ENCODE measurements at regions of chr10 and their contacts with region 1.

Region 1: DNA sequence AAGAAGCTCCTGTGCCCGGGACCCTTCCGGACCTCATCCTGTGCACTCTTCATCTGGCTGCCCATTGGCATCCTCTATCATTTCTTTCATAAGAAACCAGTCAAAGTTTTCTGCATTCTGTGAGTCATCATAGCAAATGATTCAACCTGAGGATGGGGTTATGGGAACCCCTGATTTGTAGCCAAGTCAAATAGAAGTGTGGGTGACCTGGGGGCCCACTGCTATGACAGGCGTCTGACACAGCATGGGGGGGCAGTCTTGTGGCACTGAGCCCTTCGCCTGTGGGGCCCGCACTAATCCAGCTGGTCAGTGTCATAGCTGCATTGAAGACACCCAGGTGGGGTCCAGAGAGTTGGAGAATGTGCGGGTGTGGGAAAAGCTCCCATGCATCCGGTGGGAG is 230.4 kb downstream of the USP6NL start:
- DNase-seq: no peak
- H3K4me3 ChIP-seq: no peak overlapping the region
- H3K27ac ChIP-seq: no peak overlapping the region
- H3K4me1 ChIP-seq: no peaks in the 10 kb centered on the region
- H3K27me3 ChIP-seq: no peaks in the 10 kb centered on the region
- CTCF ChIP-seq: no peak

Region 2: DNA sequence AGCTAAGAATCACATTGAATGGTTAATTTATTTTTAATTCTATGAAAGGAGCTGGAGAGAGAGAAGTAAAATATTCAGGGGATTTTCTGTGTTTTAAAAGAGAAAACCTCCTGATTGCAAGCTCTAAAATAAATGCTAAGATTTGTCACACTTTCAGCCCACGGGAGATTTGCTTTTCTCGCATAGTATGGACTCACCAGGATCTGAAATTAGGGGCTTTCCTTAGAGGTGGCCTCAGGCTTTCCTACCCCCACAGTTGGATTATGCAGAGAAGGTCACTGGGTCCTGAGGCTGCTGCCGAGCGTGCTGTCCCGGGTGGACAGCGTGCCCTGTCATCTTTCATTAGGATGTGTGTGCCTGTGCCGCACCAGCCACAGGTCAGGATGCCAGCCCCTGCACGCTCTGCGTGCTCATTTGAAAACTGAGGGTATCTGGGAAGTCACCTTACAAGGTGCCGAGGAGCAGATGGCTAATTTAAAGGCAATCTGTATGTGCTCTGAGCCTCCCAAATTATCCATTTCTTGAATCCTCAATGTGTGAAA is 104.5 kb before region 1 on chr10:
- CTCF ChIA-PET with region 1: no interaction called
- dilution Hi-C with region 1: loop called (anchors 5 kb)
- in situ Hi-C with region 1: no loop called
- intact Hi-C with region 1: no loop called
- DNase-seq: no peak
- H3K4me3 ChIP-seq: no peak overlapping the region
- H3K27ac ChIP-seq: no peak overlapping the region
- H3K4me1 ChIP-seq: no peaks in the 10 kb centered on the region
- H3K27me3 ChIP-seq: no peaks in the 10 kb centered on the region
- CTCF ChIP-seq: no peak

Region 3: DNA sequence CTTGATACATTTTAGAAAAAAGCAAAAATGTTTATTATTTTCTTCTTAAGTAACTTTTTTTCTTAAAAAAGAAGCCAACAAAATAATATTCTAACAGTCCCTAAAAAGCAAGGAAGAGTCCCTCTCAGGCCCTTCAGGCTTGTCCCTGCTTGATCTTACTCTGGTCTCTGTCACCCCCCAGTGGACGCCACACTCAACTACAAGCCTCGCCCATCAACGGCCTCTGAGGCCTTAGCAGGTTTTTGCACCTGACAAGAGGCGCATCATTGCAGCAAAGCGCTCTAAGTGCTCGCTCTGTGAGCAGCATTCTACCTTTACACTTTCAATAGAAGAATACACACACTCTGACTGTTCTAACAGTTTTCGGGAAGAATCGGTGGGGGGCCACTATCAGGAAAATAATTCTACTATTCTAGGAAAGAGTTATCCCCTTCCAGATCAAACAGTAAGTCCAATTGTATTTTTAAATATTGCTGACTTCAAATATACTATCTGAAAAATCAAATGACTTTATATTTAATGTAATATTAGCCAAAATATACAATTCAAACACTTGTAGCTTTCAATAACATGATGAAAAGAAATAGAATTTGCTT is 91.2 kb after region 1 on chr10:
- CTCF ChIA-PET with region 1: no interaction called
- dilution Hi-C with region 1: no loop called
- in situ Hi-C with region 1: no loop called
- intact Hi-C with region 1: no loop called
- DNase-seq: peak; percentile 45
- H3K4me3 ChIP-seq: no peak overlapping the region
- H3K27ac ChIP-seq: no peak overlapping the region
- H3K4me1 ChIP-seq: no peaks in the 10 kb centered on the region
- H3K27me3 ChIP-seq: no peaks in the 10 kb centered on the region
- CTCF ChIP-seq: peak; percentile 76 to 91

Region 4: GRCh38 chr10:11611248-11612020 is 230.4 kb after region 1 on chr10 and contains the start of gene USP6NL:
- CTCF ChIA-PET with region 1: no interaction called
- dilution Hi-C with region 1: no loop called
- in situ Hi-C with region 1: no loop called
- intact Hi-C with region 1: no loop called
- DNase-seq: peak; percentile 82
- H3K4me3 ChIP-seq: peak within 1 kb of the TSS; percentile 74 to 92 (median 87)
- H3K27ac ChIP-seq: peak within 1 kb of the TSS; percentile 61
- H3K4me1 ChIP-seq: peaks cover 13% of the 10 kb centered on the region
- H3K27me3 ChIP-seq: no peaks in the 10 kb centered on the region
- CTCF ChIP-seq: no peak
- total RNA-seq, gene USP6NL: 12.2 to 13.9 TPM

Measured in mammary epithelial cell (primary cell).